ENCODE measurements at regions of chr12 and their contacts with region 1.

Region 1: GRCh38 chr12:53424626-53425514 is 1.2 kb downstream of the AMHR2 start:
- DNase-seq: no peak
- H3K4me3 ChIP-seq: no peak overlapping the region
- H3K27ac ChIP-seq: no peak overlapping the region
- H3K4me1 ChIP-seq: peaks cover 10% of the 10 kb centered on the region
- H3K27me3 ChIP-seq: no peaks in the 10 kb centered on the region
- CTCF ChIP-seq: no peak

Region 2: DNA sequence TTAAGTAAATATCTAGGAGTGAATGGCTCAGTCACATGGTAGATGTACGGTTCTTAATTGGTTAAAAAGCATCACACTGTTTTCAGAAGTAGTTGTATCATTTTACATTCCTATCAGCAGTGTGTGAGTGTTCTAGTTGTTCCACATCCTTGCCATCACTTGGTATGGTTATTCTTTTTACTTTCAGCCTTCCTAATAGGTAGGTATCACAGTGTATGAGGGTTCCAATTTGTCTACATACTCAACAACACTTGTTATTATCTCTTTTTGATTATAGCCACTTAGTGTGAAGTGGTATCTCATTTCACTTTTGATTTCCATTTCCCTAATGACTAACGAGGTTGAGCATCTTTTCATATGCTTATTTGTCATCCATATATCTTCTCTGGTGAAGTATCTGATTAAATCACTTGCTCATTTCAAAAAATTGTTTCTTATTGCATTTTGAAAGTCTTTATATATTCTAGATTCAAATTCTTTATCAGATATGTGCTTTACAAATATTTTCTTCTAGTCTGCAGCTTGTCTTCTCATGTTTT is 342.2 kb before region 1 on chr12:
- CTCF ChIA-PET with region 1: no interaction called
- POLR2A ChIA-PET with region 1: no interaction called
- intact Hi-C with region 1: no loop called
- DNase-seq: no peak
- H3K4me3 ChIP-seq: no peak overlapping the region
- H3K27ac ChIP-seq: no peak overlapping the region
- H3K4me1 ChIP-seq: peaks cover 4% of the 10 kb centered on the region
- H3K27me3 ChIP-seq: no peaks in the 10 kb centered on the region
- CTCF ChIP-seq: no peak

Region 3: GRCh38 chr12:53213348-53213747 is 211.5 kb before region 1 on chr12:
- CTCF ChIA-PET with region 1: interaction called, 9 read pairs
- POLR2A ChIA-PET with region 1: no interaction called
- intact Hi-C with region 1: loop called (anchors 1 kb)
- DNase-seq: peak; percentile 86
- H3K4me3 ChIP-seq: no peak overlapping the region
- H3K27ac ChIP-seq: no peak overlapping the region
- H3K4me1 ChIP-seq: peaks cover 19% of the 10 kb centered on the region
- H3K27me3 ChIP-seq: no peaks in the 10 kb centered on the region
- CTCF ChIP-seq: peak; percentile 98

Region 4: DNA sequence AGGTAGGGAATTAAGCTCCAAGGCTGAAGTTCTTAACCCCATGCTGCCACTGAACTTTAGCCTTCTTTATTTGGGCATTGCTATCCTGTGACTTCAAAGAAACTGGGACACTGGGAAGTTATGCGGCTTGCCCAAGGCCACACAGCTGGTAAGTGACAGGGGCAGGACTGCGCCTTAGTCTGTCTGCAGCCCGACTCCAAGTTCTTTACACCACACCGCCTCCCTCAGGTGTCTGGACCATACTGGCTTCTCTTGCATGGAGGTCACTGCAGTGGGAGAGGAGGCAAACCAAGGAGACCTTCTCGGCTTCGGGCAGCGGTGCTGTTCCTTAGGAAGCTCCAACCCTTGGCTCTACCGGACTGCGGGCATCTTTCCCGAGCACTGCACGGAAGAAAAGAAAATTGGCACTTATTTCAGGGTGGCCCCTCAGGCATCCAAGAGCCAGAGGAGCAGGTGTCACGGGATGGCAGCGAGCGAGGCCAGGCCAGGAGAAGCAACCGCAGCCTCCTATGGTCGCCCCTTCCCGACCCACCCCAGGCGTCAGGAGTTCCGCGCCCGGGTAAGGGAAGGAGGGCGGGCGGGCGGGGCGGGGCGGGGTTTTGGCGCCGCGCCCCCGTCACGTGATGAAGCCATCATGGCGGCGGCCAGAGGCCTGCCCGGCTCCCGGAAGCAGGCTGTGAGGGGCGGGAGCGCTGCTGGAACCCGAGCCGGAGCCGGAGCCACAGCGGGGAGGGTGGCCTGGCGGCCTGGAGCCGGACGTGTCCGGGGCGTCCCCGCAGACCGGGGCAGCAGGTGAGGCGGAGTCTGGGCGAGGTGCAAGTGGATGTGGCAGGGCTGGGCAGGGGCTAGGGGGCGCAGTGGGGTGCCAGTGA is 173.2 kb before region 1 on chr12:
- CTCF ChIA-PET with region 1: no interaction called
- POLR2A ChIA-PET with region 1: no interaction called
- intact Hi-C with region 1: no loop called
- DNase-seq: peak; percentile 80
- H3K4me3 ChIP-seq: peak overlapping the region; percentile 82
- H3K27ac ChIP-seq: peak overlapping the region; percentile 68
- H3K4me1 ChIP-seq: peaks cover 6% of the 10 kb centered on the region
- H3K27me3 ChIP-seq: no peaks in the 10 kb centered on the region
- CTCF ChIP-seq: peak; percentile 41

Region 5: DNA sequence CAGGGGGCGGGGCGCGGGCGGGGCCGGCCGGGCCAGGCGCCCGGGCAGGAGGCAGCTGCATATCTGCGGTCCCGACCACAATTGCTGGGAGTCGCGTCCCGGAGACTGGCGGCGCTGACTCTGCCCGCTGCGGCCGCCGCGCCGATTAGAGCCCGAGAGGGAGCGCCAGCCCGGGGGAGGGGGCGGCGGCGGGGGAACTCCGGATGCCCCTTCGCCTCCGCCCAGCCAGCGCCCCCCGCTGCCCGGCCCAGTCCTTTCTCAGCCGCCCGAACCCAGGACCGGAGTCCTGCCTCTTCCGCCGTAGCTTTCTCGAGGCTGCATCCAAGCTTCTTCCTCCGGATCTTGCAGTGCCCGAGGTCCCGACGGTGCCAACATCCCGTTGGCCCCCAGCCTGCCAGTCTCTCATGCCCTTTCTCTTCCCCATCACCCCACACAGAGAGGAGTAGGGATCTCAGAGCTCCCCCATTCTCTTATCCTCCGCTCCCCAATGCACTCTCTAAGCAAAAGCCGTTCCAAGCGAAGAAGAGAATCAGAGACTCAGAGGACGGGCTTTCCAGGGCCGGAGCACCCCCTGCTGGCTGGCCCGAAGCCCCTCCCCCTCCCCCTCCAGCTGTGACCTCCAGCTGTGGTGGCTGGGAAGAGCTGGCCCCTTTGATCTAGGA is 79.9 kb before region 1 on chr12:
- CTCF ChIA-PET with region 1: interaction called, 15 read pairs
- POLR2A ChIA-PET with region 1: no interaction called
- intact Hi-C with region 1: no loop called
- DNase-seq: peak; percentile 72
- H3K4me3 ChIP-seq: peak overlapping the region; percentile 56
- H3K27ac ChIP-seq: peak overlapping the region; percentile 69
- H3K4me1 ChIP-seq: peaks cover 13% of the 10 kb centered on the region
- H3K27me3 ChIP-seq: no peaks in the 10 kb centered on the region
- CTCF ChIP-seq: peak; percentile 61

Region 6: GRCh38 chr12:53352331-53353256 is 72.3 kb before region 1 on chr12:
- CTCF ChIA-PET with region 1: interaction called, 52 read pairs
- POLR2A ChIA-PET with region 1: no interaction called
- intact Hi-C with region 1: loop called (anchors 1 kb)
- DNase-seq: peak; percentile 92
- H3K4me3 ChIP-seq: no peak overlapping the region
- H3K27ac ChIP-seq: no peak overlapping the region
- H3K4me1 ChIP-seq: no peaks in the 10 kb centered on the region
- H3K27me3 ChIP-seq: no peaks in the 10 kb centered on the region
- CTCF ChIP-seq: peak; percentile 90

Region 7: DNA sequence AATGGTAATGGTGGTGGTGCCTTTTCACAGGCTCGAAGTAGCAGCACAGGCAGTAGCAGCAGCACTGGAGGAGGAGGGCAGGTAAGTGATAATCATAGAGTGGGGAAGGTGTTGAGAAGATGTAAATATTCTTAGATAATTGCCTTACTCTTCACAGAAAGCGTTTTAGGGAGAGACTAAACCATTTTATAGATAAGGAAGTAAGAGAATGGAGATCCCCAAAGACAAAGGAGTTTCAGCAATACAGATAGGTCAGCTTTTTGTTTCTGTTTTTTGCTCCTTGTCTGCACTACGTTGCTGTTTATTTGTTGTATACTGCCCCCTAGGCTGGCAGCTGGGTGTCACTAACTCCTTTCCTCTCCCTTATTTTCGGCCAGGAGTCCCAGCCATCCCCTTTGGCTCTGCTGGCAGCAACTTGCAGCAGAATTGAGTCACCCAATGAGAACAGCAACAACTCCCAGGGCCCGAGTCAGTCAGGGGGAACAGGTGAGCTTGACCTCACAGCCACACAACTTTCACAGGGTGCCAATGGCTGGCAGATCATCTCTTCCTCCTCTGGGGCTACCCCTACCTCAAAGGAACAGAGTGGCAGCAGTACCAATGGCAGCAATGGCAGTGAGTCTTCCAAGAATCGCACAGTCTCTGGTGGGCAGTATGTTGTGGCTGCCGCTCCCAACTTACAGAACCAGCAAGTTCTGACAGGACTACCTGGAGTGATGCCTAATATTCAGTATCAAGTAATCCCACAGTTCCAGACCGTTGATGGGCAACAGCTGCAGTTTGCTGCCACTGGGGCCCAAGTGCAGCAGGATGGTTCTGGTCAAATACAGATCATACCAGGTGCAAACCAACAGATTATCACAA is 42.9 kb before region 1 on chr12:
- CTCF ChIA-PET with region 1: interaction called, 7 read pairs
- POLR2A ChIA-PET with region 1: interaction called, 13 read pairs
- intact Hi-C with region 1: no loop called
- DNase-seq: peak; percentile 72
- H3K4me3 ChIP-seq: peak overlapping the region; percentile 77
- H3K27ac ChIP-seq: peak overlapping the region; percentile 98
- H3K4me1 ChIP-seq: peaks cover 29% of the 10 kb centered on the region
- H3K27me3 ChIP-seq: no peaks in the 10 kb centered on the region
- CTCF ChIP-seq: peak; percentile 59